ENCODE measurements at regions of chr11 and their contacts with region 1.

Region 1: DNA sequence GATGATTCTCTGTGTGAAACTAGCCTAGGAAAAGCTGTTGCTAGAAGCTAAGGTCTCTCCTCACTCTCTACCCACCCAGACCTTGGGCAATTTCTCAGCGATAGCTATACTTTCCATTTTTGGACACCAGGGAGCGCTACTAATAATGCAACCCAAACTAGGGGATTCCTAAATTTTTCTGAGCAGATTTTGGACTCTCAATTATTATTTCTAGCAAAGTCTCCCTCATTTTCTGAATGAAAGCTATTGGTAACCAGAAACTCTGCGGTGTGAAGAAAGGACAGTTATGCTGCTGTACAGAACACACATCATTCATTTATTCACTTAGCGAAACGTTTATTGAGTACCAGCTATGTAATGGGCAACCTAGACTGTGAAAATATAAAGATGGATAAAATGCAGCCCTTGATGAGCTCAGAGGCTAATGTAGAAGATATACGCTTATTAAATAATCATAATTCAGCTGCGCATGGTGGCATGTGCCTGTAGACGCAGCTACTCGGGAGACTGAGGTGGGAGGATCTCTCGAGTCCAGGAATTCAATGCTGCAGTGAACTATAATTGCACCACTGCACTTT is 6.1 kb upstream of the STIM1 start:
- DNase-seq: peak; percentile 37
- CTCF ChIP-seq: peak; percentile 69

Region 2: DNA sequence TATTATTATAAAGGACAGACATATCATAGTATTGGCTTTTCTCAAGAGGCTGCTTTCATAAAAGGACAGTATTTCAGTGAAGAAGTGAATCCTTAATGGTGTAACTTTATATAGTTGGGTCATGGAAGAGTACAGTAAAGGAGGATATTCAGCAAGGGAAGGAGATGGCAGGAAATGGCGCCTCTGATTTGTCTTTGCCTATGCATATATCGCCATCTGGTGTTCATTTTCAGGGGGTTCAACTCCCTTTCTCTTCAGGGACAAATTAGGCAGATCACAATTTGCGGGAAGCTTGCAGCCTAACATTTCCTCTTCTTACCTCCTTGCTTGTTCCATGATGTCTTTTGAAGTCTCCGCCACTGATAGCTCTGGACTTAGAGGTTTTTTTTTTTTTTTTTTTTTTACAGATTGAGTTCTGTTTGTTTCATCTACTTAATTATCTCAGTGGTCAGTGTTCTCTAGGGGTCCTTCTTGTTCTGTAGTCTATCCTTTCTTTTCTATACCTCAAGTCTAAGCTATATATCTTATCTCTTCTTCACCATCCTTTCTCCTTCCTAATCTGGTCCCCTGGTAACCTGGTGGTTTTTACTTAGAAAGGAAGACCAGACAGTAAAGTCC is 223.4 kb after region 1 on chr11:
- in situ Hi-C with region 1: loop called (anchors 5 kb)
- DNase-seq: peak; percentile 62
- CTCF ChIP-seq: peak; percentile 81

Measured in GM13977 (cell line).